ENCODE measurements at regions of chr13 and their contacts with region 1.

Region 1: DNA sequence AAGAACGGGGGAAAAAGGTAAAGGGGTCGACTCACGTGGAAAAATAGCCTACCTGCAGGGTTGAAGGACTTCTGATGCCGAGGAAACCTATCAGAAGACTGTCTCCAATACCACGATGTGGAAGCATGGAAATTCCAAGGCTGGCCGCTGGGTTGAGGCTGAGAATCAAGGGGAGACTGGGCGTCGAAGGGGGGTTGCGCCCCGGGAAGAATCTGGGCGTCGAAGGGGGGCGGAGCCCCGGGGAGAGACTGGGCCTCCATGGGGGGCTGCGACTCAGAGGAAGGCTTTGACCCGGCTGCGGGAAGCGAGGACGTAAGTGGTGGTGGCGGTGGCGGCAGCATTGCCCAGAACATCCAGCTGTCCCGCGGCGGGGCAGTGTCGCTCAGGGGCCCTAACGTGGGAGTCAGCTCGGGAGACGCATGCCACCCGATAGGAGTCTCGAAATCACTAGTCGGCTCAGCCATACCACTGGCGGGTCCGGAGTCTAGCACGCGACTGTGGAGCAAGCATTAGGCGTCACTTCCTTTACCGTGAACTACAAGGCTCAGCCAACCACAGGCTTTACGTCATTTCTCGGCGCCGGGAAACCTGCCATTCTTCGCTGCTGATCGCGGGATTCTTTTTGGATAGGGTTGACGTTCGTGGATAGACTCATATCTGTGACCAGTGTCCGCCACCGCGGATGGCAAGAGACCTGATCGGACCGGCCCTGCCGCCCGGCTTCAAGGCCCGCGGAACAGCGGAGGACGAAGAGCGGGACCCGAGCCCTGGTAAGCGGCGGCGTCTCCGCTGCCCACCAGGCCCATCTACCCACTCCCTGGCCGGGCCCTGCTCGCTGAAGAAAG is at the starts of genes GPALPP1 and NUFIP1:
- DNase-seq: peak; percentile 94
- H3K4me3 ChIP-seq: peak within 1 kb of the TSS; percentile 78 to 98 (median 84)
- H3K27ac ChIP-seq: peak within 1 kb of the TSS; percentile 83
- H3K4me1 ChIP-seq: peaks cover 21% of the 10 kb centered on the region
- H3K27me3 ChIP-seq: no peaks in the 10 kb centered on the region
- CTCF ChIP-seq: peak in 1 of 2 donors; percentile 7
- POLR2A ChIP-seq: peak; percentile 75
- total RNA-seq, gene GPALPP1: 26.1 and 28.2 TPM in 2 replicates
- total RNA-seq, gene NUFIP1: 6.9 and 7.4 TPM in 2 replicates

Region 2: GRCh38 chr13:44801990-44802389 is 187.2 kb before region 1 on chr13:
- CTCF ChIA-PET with region 1: no interaction called
- POLR2A ChIA-PET with region 1: no interaction called
- dilution Hi-C with region 1: no loop called
- intact Hi-C with region 1: loop called (anchors 1 kb)
- DNase-seq: peak; percentile 92
- H3K4me3 ChIP-seq: no peak overlapping the region
- H3K27ac ChIP-seq: no peak overlapping the region
- H3K4me1 ChIP-seq: peaks cover 20% of the 10 kb centered on the region
- H3K27me3 ChIP-seq: no peaks in the 10 kb centered on the region
- CTCF ChIP-seq: no peak
- POLR2A ChIP-seq: no peak

Region 3: DNA sequence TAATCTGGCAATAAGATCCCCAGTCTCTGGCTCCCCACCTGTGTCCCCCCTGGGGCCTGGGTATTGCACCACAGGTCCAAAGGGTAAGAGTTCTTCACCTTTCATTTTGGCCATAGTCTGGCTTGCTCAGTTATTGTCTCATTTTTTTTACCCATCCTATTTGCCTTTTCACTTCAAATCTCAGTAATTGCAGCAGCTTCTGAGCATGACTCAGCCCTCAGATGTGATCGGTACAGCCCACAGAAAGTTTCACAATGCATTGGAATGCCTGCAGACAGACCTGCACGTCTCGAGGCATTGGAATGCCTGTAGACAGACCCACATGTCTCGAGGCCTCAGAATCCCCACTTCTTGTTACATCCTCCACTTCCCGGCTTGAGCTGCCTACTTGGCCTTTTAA is 173.6 kb before region 1 on chr13:
- CTCF ChIA-PET with region 1: no interaction called
- POLR2A ChIA-PET with region 1: no interaction called
- dilution Hi-C with region 1: no loop called
- intact Hi-C with region 1: no loop called
- DNase-seq: peak; percentile 54
- H3K4me3 ChIP-seq: no peak overlapping the region
- H3K27ac ChIP-seq: no peak overlapping the region
- H3K4me1 ChIP-seq: peaks cover 29% of the 10 kb centered on the region
- H3K27me3 ChIP-seq: no peaks in the 10 kb centered on the region
- CTCF ChIP-seq: no peak
- POLR2A ChIP-seq: no peak

Region 4: DNA sequence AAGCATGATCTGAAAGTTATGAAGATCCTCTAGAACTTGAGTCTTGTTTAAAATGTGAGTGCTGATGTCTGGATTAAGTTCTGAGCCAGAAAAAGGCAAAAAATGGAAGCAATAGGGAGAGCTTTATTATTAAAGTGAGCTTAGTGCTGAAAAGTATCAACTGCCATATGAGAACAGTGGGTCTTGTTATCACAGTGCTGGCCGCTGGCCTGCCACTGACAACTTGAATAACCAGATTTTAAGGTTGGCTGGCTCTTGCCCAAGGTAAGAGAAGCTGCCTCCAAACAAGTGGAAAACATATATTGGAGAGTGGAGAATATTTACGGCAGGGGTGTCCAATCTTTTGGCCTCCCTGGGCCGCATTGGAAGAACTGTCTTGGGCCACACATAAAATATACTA is 33.8 kb before region 1 on chr13:
- CTCF ChIA-PET with region 1: no interaction called
- POLR2A ChIA-PET with region 1: no interaction called
- dilution Hi-C with region 1: no loop called
- intact Hi-C with region 1: no loop called
- DNase-seq: no peak
- H3K4me3 ChIP-seq: no peak overlapping the region
- H3K27ac ChIP-seq: no peak overlapping the region
- H3K4me1 ChIP-seq: no peaks in the 10 kb centered on the region
- H3K27me3 ChIP-seq: no peaks in the 10 kb centered on the region
- CTCF ChIP-seq: no peak
- POLR2A ChIP-seq: no peak

Region 5: DNA sequence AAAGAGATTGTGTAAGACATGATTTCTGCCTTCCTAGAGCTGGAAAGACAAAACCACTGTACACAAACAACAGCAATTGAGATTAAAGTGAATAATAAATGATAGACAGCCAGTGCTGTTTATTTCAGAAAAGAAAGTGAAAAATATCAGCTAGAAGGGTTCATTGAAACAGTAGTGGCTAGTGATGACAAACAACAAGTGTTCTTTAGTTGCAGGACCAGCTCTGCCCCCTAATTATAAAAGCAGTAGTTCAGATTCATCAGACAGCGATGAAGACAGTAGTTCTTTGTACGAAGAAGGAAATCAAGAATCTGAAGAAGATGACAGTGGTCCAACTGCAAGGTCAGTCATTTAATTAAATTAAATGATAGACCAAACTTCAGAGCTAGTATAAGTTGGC is 14.9 kb after region 1 on chr13:
- CTCF ChIA-PET with region 1: no interaction called
- POLR2A ChIA-PET with region 1: no interaction called
- dilution Hi-C with region 1: no loop called
- intact Hi-C with region 1: no loop called
- DNase-seq: no peak
- H3K4me3 ChIP-seq: no peak overlapping the region
- H3K27ac ChIP-seq: no peak overlapping the region
- H3K4me1 ChIP-seq: no peaks in the 10 kb centered on the region
- H3K27me3 ChIP-seq: no peaks in the 10 kb centered on the region
- CTCF ChIP-seq: no peak
- POLR2A ChIP-seq: no peak

Region 6: DNA sequence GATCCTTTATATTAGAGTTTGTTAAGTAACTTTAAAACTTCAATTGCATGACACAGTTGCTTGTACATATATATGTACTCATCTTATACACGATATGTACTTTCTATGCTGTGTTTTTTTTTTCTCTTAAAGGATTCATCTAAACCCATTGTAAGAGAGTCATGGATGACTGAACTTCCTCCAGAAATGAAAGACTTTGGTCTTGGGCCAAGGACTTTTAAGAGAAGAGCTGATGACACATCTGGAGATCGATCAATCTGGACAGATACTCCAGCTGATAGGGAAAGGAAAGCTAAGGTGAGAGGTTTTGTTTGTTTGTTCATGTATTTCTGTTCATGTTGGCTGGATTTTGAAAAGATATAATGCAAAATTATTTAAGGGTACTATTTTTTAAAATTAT is 26.1 kb after region 1 on chr13:
- CTCF ChIA-PET with region 1: no interaction called
- POLR2A ChIA-PET with region 1: interaction called, 10 read pairs
- dilution Hi-C with region 1: no loop called
- intact Hi-C with region 1: no loop called
- DNase-seq: peak; percentile 12
- H3K4me3 ChIP-seq: no peak overlapping the region
- H3K27ac ChIP-seq: no peak overlapping the region
- H3K4me1 ChIP-seq: peaks cover 12% of the 10 kb centered on the region
- H3K27me3 ChIP-seq: no peaks in the 10 kb centered on the region
- CTCF ChIP-seq: no peak
- POLR2A ChIP-seq: no peak

Region 7: DNA sequence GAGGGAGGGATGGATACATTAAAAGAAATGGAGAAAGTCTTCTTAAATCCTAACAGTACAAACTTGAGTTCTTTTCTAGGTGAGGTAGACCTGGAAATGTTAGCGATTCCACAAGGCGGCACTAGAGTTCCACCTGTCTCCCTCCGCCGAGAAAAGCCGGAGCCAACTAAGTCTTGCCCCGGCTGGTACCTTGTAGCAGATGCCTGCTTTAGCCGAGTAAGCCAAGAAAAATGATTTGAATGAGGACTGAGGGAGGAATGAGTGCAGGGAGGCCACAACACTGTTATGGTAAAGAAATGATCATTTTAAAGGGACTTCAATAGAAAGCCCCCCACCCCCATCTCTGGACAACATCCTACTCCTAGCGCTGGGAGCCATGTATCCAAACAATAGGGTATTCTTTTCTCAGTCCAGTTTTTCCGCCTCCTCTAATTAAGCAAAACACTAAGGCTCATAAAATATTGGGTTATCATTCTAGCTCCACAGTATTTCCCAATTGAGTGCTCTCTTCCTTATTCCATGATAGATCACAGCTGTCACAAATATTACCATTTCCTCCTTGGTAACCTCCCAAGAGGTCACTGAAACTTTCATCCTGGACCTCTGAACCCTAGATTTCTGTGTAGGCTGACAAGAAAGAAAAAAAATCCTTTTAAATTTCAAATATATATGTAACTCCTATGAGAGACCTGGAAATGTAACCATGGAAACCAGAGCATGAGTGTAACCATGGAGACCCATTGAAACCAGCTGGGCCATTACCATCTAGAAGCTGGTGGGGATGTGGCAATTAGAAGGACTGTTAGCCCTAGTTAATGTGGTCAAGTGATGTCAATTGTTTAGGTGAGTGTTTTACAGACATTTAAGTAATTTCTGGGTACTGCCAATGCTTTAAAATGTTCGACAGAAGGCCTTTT is 58.5 kb after region 1 on chr13:
- CTCF ChIA-PET with region 1: no interaction called
- POLR2A ChIA-PET with region 1: no interaction called
- dilution Hi-C with region 1: no loop called
- intact Hi-C with region 1: no loop called
- DNase-seq: peak; percentile 88
- H3K4me3 ChIP-seq: peak overlapping the region; percentile 17 to 64 (median 36)
- H3K27ac ChIP-seq: no peak overlapping the region
- H3K4me1 ChIP-seq: peaks cover 7% of the 10 kb centered on the region
- H3K27me3 ChIP-seq: peaks cover 0 to 4% of the 10 kb centered on the region in 2 experiments
- CTCF ChIP-seq: peak; percentile 82 to 84
- POLR2A ChIP-seq: no peak

Measured in endothelial cell of umbilical vein (primary cell).